ENCODE measurements at regions of chr15 and their contacts with region 1.

Region 1: GRCh38 chr15:63035977-63036376 is 6.6 kb upstream of the TPM1 start:
- DNase-seq: no peak
- ATAC-seq: peak; percentile 55 to 71 (median 60)
- H3K4me3 ChIP-seq: peak overlapping the region; percentile 24
- H3K27ac ChIP-seq: peak overlapping the region; percentile 93
- H3K4me1 ChIP-seq: peaks cover 15% of the 10 kb centered on the region
- H3K27me3 ChIP-seq: no peaks in the 10 kb centered on the region
- CTCF ChIP-seq: peak; percentile 30

Region 2: DNA sequence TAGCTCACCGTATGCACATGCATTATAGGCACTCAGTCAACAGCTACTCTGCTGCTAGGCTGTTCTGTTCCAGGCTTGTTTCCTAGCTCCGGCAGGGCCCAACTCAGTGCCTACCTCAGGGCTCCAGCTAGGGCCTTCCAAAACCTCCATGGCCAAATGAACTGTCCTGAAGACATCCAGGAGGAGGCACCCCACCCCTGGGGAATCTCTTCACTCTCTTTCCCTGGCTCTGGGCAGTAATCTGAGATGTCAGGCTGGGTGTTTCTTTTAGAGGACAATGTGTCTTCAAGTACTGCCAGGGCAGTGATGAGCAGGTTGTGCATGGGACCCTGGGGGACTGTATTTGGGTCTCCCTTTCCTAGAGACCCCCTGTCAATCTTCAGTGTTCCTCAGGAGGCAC is 31.8 kb before region 1 on chr15:
- intact Hi-C with region 1: loop called in 1 of 2 experiments (anchors 1 kb)
- DNase-seq: peak in 1 of 2 donors; percentile 62
- ATAC-seq: peak; percentile 67 to 97 (median 90)
- H3K4me3 ChIP-seq: no peak overlapping the region
- H3K27ac ChIP-seq: no peak overlapping the region
- H3K4me1 ChIP-seq: no peaks in the 10 kb centered on the region
- H3K27me3 ChIP-seq: no peaks in the 10 kb centered on the region
- CTCF ChIP-seq: peak; percentile 34

Region 3: DNA sequence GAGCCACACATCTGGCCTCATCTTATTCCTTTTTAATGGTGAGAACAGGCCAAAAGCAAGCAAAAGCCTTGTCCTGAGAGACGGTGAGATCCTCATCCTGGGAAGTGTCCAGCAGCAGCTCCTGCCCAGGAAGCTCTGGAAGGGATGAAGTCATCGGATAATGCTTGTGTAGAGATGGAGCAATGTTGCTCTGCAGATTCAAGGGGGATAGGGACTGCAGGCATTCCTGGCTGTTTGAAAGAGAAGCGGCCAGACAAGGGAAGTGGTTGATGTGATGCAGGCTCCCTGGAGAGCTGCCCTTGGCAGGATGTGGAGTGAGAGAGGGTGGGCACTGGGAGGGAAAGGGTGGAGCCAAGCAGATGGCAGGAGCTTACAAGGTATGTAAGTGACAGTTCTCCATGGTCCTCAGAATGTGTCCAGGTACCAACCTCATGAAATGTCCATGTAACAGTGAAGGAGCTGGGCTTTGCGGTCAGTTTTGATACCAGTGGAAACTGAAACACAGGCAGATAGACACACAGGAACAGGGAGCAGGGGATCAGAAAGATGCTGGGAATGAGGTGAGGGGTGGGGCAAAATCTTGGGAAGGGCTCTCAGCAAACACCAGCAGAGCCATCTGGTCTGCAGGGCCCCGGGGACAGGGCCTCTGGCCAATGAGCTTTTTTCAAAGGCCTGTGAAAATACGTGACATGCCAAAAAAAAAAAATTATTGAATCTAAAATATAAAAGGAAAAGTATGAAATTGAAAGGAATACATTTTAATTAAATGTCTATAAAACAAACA is 53.5 kb after region 1 on chr15:
- intact Hi-C with region 1: no loop called
- DNase-seq: peak; percentile 31 to 77
- ATAC-seq: peak in 2 of 4 donors; percentile 19 to 32
- H3K4me3 ChIP-seq: no peak overlapping the region
- H3K27ac ChIP-seq: no peak overlapping the region
- H3K4me1 ChIP-seq: no peaks in the 10 kb centered on the region
- H3K27me3 ChIP-seq: no peaks in the 10 kb centered on the region
- CTCF ChIP-seq: no peak

Measured in psoas muscle (tissue), 8 donors.